ENCODE measurements at regions of chr14 and their contacts with region 1.

Region 1: GRCh38 chr14:106372870-106373652 is 846.7 kb downstream of the TMEM121 start:
- DNase-seq: peak; percentile 76
- CTCF ChIP-seq: peak; percentile 99

Region 2: DNA sequence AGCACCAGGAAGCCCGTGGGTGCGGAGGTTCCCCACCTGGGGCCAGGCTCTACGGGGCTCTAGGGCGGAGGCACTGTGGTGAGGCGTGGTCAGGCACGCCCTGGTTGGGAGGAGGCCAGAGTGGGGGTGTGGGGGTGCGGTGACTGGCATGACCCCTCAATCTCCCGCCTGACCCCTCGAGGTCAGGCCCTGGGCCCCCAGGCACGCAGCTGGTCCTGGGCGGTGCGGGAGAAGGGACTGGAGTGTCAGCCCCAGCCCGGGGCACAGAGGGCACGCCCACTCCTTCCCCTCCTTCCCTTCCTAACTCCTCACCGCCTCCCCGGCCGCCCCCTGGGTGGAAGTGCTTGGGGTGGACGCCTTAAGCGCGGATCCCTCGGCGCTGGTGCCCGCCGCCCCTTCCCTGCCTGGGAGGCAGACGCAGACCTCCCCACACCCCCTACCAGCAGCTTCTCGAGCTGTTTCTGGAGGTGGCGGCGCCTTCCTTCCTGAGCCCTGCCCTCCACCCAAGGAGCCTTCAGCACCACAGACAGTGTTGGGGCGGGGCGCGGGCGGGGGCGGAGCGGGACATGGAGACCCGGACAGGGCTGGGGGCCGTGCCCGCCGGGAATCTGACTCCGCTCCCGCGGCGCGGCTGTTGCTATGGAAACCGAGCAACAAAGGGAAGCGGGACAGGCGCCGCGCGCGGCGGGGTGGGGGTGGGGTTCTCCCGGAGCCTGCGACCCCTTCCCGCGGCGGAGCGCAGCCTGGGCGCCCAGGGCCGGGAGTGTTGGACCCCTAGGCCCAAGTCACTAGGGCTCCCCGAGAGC is 899.2 kb before region 1 on chr14:
- CTCF ChIA-PET with region 1: no interaction called
- POLR2A ChIA-PET with region 1: no interaction called
- DNase-seq: peak; percentile 66
- CTCF ChIP-seq: no peak

Region 3: GRCh38 chr14:106315411-106315810 is 57.6 kb before region 1 on chr14:
- CTCF ChIA-PET with region 1: no interaction called
- POLR2A ChIA-PET with region 1: no interaction called
- DNase-seq: no peak
- CTCF ChIP-seq: no peak

Region 4: GRCh38 chr14:106327234-106327633 is 45.8 kb before region 1 on chr14:
- CTCF ChIA-PET with region 1: interaction called, 11 read pairs
- POLR2A ChIA-PET with region 1: no interaction called
- DNase-seq: no peak
- CTCF ChIP-seq: no peak

Region 5: GRCh38 chr14:106343626-106344025 is 29.4 kb before region 1 on chr14:
- CTCF ChIA-PET with region 1: interaction called, 25 read pairs
- POLR2A ChIA-PET with region 1: no interaction called
- DNase-seq: no peak
- CTCF ChIP-seq: no peak

Region 6: DNA sequence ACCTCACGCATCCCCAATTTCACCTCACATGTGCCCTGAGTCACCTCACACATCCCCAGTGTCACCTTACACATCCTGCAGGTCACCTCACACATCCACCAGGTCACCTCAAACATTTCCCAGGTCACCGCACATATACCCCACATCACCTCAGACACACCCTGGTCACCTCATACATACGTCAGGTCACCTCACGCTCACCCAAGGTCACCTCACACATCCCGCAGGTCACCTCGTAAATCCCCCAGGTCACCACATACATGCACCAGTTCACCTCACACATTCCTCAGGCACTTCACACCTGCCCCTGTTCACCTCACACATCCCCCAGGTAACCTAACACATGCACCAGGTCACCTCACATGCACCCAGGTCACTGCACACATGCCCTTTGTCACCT is 17.3 kb after region 1 on chr14:
- CTCF ChIA-PET with region 1: interaction called, 17 read pairs
- POLR2A ChIA-PET with region 1: no interaction called
- DNase-seq: no peak
- CTCF ChIP-seq: no peak

Region 7: DNA sequence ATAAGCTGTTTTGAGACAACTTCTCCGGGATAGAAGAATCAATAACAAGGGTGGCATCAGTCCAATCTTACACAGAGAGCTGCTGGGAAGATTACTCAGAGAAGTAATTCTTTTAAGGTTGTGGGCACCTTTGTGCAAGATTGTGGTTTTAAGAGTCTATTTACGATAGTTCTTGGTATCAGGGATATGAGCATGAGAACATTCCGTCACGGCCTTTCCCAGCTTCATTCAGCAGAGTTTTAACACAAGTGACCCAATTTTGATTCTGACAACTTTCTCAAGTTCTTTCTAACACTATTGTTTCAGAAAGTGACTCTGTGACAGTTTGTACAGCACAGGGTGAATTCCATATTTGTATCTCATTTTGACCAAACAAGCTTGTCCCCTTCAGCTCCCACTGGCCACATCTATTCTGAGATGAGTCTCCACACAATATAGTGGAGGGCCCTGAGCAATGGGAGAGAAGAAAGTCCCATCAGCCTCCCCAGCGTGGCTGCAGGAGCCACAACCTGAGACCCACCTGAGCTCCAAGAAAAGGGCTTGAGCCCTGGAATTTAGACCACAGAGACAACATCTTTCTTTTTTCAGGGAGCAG is 22.5 kb after region 1 on chr14:
- CTCF ChIA-PET with region 1: interaction called, 17 read pairs
- POLR2A ChIA-PET with region 1: no interaction called
- DNase-seq: no peak
- CTCF ChIP-seq: no peak